Panc1 (cell line): ENCODE measurements at regions of chr18 and their contacts with region 1.

Region 1: GRCh38 chr18:24726727-24727492 is 266.5 kb downstream of the HRH4 start:
- DNase-seq: peak; percentile 28
- ATAC-seq: peak; percentile 87
- H3K4me3 ChIP-seq: peak overlapping the region; percentile 6 to 31; a peak in 3 of 4 replicates
- H3K27ac ChIP-seq: no peak overlapping the region
- H3K4me1 ChIP-seq: no peaks in the 10 kb centered on the region
- H3K27me3 ChIP-seq: peaks cover 13% of the 10 kb centered on the region
- CTCF ChIP-seq: peak; percentile 91

Region 2: DNA sequence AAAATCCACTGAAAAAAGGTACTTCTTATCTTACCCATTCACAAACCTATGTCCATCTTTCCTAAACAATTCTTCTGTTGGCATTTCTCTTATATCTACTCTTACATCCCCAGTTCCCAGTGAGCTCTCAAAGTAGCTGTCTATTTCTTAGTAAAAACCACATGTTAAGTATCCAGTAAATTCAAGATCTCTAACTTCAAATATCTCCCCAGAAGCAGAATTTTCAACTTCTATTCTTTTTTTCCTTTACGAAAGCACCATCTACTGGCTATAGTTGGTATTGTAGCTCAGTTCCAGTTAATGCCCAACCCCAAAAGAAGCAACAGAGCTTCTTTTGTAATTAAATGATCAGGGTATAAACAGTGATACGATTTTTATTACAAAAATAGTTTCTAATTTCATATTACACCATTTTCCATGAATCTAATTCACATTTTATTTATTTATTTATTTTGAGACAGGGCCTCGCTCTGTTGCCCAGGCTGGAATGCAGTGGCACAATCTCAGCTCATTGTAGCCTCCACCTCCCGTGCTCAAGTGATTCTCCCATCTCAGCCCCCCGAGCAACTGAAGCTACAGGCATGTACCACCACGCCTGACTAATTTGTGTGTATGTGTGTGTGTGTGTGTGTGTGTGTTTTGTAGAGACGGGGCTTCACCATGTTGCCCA is 238.0 kb before region 1 on chr18:
- CTCF ChIA-PET with region 1: interaction called, 4 read pairs
- POLR2A ChIA-PET with region 1: no interaction called
- in situ Hi-C with region 1: no loop called
- intact Hi-C with region 1: loop called (anchors 10 kb)
- DNase-seq: peak; percentile 22
- ATAC-seq: peak; percentile 47; the same call in 1 of the 2 replicates
- H3K4me3 ChIP-seq: no peak overlapping the region
- H3K27ac ChIP-seq: no peak overlapping the region
- H3K4me1 ChIP-seq: no peaks in the 10 kb centered on the region
- H3K27me3 ChIP-seq: peaks cover 5% of the 10 kb centered on the region; the same call in 1 of the 2 replicates
- CTCF ChIP-seq: peak; percentile 82

Region 3: GRCh38 chr18:24543805-24544498 is 183.0 kb before region 1 on chr18:
- CTCF ChIA-PET with region 1: interaction called, 14 read pairs
- POLR2A ChIA-PET with region 1: no interaction called
- in situ Hi-C with region 1: no loop called
- intact Hi-C with region 1: loop called (anchors 1 kb)
- DNase-seq: no peak
- ATAC-seq: peak; percentile 78
- H3K4me3 ChIP-seq: no peak overlapping the region
- H3K27ac ChIP-seq: no peak overlapping the region
- H3K4me1 ChIP-seq: no peaks in the 10 kb centered on the region
- H3K27me3 ChIP-seq: no peaks in the 10 kb centered on the region; the same call in none of the 2 replicates
- CTCF ChIP-seq: peak; percentile 71

Region 4: GRCh38 chr18:24741965-24742724 is 15.2 kb after region 1 on chr18:
- CTCF ChIA-PET with region 1: no interaction called
- POLR2A ChIA-PET with region 1: no interaction called
- in situ Hi-C with region 1: no loop called
- intact Hi-C with region 1: no loop called
- DNase-seq: no peak
- ATAC-seq: no peak
- H3K4me3 ChIP-seq: no peak overlapping the region
- H3K27ac ChIP-seq: no peak overlapping the region
- H3K4me1 ChIP-seq: no peaks in the 10 kb centered on the region
- H3K27me3 ChIP-seq: peaks cover 5% of the 10 kb centered on the region; the same call in 1 of the 2 replicates
- CTCF ChIP-seq: no peak